Gastrocnemius medialis (tissue), 4 donors: ENCODE measurements at regions of chr5 and their contacts with region 1.

Region 1: DNA sequence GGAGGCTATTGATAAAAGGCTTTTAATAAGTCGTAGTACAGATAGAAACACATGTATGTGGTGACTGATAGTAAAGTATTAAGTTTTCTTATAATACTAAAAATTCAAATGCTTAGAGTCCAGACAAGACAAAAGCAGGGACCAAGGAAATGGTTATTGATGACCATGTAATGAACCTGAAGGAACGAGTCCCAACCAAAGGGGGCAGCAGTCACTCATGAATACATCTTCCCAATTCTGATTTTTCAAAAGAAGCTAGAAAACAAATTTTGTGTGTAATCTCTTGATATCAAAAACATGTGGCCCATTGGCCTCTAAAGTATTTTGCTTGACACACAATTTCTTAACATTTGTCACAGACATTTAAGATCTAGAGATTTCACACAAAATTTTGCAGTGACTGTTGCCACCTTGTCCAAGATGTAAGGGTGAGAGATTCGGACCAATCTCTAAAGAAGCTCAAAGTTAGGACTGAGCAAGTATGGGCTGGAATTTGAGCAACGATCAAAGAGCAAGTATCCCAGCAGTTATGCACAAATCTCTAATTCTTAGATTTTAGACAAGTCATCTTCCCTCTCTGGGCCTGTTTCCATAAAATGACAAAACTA is 66.8 kb downstream of the ARL15 start:
- DNase-seq: no peak
- ATAC-seq: no peak
- H3K4me3 ChIP-seq: no peak overlapping the region
- H3K27ac ChIP-seq: no peak overlapping the region
- H3K4me1 ChIP-seq: peaks cover 0 to 3% of the 10 kb centered on the region in 2 donors
- H3K27me3 ChIP-seq: no peaks in the 10 kb centered on the region
- CTCF ChIP-seq: peak; percentile 4 to 51 (median 41)
- POLR2A ChIP-seq: no peak

Region 2: DNA sequence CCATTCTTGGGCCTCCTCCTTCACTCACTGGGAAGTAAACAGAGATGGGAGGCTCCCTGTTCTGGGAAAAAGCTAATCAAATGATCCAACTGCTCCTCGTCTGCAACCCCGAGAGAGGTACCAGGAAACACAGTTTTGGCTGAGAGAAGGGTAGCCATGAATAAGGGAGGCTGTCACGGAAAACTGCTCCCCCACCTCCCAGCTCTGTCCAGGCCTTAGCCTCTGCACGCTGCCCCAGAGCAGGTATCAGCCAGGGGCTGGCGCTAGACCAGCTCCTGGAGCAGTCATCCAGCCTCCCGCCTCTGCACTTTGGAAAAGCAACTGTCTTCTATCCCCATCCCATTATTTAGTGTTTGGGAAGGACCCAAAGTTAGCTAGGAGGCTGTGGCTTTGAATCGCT is 417.1 kb before region 1 on chr5:
- in situ Hi-C with region 1: no loop called
- intact Hi-C with region 1: no loop called
- DNase-seq: no peak
- ATAC-seq: no peak
- H3K4me3 ChIP-seq: no peak overlapping the region
- H3K27ac ChIP-seq: no peak overlapping the region
- H3K4me1 ChIP-seq: no peaks in the 10 kb centered on the region
- H3K27me3 ChIP-seq: no peaks in the 10 kb centered on the region
- CTCF ChIP-seq: no peak
- POLR2A ChIP-seq: no peak

Region 3: GRCh38 chr5:54867310-54867944 is 623.9 kb after region 1 on chr5:
- in situ Hi-C with region 1: loop called in 1 of 4 experiments (anchors 25 kb)
- intact Hi-C with region 1: loop called (anchors 10 kb)
- DNase-seq: no peak
- ATAC-seq: peak; percentile 61 to 62
- H3K4me3 ChIP-seq: peak overlapping the region in 3 of 4 donors; percentile 23 to 37 (median 33)
- H3K27ac ChIP-seq: no peak overlapping the region
- H3K4me1 ChIP-seq: no peaks in the 10 kb centered on the region
- H3K27me3 ChIP-seq: no peaks in the 10 kb centered on the region
- CTCF ChIP-seq: peak; percentile 32 to 69 (median 55)
- POLR2A ChIP-seq: no peak